ENCODE measurements at regions of chr7 and their contacts with region 1.

Region 1: DNA sequence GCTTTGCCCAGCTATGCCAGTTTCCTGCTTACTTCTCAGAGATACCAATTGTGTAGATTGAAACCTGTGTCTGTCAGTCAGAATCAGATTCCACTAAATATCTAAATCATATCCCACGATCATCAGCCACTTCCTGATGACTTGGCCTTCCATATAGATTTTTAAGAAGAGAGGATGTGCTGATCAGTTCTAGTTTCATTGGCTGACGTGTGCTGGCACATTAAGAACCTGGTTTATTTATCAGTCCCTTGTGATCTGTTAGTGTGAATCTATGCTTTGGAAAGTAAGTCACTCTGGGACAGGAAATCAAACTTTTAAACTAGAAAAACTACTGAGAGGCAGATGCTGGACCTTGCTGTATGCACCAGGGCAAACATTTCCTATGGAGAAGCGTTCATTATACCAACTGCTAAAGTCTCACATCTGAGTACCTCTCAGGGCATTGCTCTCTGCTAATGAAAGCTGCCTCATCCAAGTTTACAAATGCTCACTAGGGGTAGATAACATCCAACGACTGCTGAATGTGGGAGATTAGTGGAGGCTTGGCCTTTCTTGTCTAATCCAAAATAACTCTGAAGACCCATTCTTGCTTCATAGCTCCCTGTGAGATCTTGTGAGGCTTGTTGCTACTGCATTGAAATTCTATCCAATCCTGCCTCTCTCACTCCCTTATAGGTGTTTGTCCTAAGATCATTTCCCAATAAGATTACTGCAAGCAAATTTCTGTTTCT is 109.1 kb downstream of the ARL4A start:
- DNase-seq: no peak
- H3K4me3 Mint-ChIP-seq: no peak overlapping the region
- H3K27ac Mint-ChIP-seq: no peak overlapping the region
- H3K4me1 Mint-ChIP-seq: peaks cover 15% of the 10 kb centered on the region
- H3K27me3 Mint-ChIP-seq: peaks cover 2% of the 10 kb centered on the region

Region 2: DNA sequence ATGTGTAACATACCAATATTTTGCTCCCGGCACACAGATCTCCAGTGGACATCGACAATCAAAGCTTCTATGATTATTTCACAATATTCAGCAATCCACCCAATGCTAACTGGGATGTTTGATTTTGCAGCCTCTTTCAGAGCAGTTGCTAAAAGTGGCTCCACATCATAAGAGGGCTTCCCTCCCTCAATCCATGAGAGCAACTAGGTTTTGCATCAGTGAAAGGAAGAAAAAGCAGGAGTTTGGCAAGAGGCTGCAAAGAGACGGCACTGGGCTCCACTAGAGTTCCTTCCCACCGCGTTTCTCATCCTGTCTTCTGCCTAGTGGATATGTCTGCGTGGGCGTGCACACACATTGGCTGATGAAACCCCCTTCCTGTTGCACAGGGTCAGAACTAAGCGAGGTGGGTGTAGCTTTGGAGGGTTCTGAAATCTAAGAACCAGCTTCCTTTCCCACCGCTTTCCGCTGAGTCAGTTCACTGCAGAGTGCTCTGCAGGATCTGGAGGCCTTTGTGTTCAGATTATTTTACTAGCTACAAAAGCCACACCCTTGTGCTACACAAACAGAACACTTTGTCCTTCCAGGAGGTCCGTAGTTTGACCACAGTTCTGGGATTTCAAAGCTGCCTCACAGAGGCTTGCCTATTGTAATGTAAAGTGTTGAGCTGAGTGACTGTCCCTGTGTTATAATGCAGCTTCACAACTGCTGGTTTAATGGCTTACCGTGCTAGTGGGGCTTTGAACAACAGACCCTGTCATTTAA is 81.0 kb before region 1 on chr7:
- intact Hi-C with region 1: loop called (anchors 5 kb)
- DNase-seq: peak; percentile 17
- H3K4me3 Mint-ChIP-seq: no peak overlapping the region
- H3K27ac Mint-ChIP-seq: no peak overlapping the region
- H3K4me1 Mint-ChIP-seq: peaks cover 28% of the 10 kb centered on the region
- H3K27me3 Mint-ChIP-seq: no peaks in the 10 kb centered on the region

Region 3: DNA sequence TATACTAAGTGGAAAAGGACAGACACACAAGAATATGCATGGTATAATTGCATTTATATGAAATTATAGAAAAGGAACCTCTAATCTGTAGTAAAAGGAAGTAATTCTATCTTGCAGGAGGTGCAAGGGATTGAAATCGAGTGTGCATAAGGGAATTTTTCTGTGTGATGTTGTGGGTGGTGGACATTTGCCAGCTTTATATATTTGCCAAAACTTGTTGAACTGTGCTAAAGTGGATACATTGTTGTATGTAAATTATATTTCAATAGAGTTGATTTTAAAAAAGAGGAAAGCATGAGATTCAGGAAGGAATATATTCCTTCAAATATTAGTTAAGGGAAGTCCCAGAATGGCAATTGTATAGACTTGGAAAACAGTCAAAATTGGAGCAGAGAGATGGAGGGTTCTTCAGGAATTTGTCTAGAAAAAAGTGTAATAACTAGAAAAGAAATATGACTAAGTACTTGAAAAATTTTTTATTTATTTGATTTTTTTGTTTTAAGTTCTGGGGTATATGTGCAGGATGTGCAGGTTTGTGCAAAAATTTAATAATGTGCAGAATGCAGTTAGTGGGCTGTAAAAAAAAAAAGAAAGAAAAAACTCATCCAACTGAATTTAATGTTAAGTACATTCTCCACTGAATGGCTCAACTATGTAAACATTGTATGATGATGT is 13.0 kb before region 1 on chr7:
- intact Hi-C with region 1: no loop called
- DNase-seq: no peak
- H3K4me3 Mint-ChIP-seq: no peak overlapping the region
- H3K27ac Mint-ChIP-seq: no peak overlapping the region
- H3K4me1 Mint-ChIP-seq: no peaks in the 10 kb centered on the region
- H3K27me3 Mint-ChIP-seq: peaks cover 4% of the 10 kb centered on the region

Region 4: GRCh38 chr7:14717816-14718215 is 1921.3 kb after region 1 on chr7:
- intact Hi-C with region 1: loop called (anchors 10 kb)
- DNase-seq: no peak
- H3K4me3 Mint-ChIP-seq: no peak overlapping the region
- H3K27ac Mint-ChIP-seq: no peak overlapping the region
- H3K4me1 Mint-ChIP-seq: peaks cover 4% of the 10 kb centered on the region
- H3K27me3 Mint-ChIP-seq: no peaks in the 10 kb centered on the region

Measured in activated T-helper 2 cell treated with anti-CD3 and anti-CD28 coated beads, Interferon-gamma antibody, Interleukin-2, Interleukin-4, amounts not matched to agents 10 μg/mL and 5 μg/mL and 100 μg/mL, durations not matched to agents 14 hours and 24 hours and 36 hours (primary cell).